HepG2 (cell line): ENCODE measurements at regions of chr21 and their contacts with region 1.

Region 1: GRCh38 chr21:44845399-44846223 is 27.7 kb upstream of the SUMO3 start:
- DNase-seq: peak; percentile 76
- ATAC-seq: peak; percentile 77
- H3K4me3 ChIP-seq: peak overlapping the region; percentile 43 to 67 (median 58)
- H3K27ac ChIP-seq: no peak overlapping the region
- H3K4me1 ChIP-seq: peaks cover 52% of the 10 kb centered on the region
- H3K27me3 ChIP-seq: peaks cover 1 to 37% of the 10 kb centered on the region in 2 experiments; a peak in 4 of 5 replicates
- CTCF ChIP-seq: peak; percentile 54
- EP300 ChIP-seq: 0 out of 4 replicates have a peak, but pooled peaks of 1 of the 2 experiments have one; percentile 4
- POLR2A ChIP-seq: no peak
- RAD21 ChIP-seq: 0 out of 2 replicates have a peak, but pooled peaks have one; percentile 24

Region 2: DNA sequence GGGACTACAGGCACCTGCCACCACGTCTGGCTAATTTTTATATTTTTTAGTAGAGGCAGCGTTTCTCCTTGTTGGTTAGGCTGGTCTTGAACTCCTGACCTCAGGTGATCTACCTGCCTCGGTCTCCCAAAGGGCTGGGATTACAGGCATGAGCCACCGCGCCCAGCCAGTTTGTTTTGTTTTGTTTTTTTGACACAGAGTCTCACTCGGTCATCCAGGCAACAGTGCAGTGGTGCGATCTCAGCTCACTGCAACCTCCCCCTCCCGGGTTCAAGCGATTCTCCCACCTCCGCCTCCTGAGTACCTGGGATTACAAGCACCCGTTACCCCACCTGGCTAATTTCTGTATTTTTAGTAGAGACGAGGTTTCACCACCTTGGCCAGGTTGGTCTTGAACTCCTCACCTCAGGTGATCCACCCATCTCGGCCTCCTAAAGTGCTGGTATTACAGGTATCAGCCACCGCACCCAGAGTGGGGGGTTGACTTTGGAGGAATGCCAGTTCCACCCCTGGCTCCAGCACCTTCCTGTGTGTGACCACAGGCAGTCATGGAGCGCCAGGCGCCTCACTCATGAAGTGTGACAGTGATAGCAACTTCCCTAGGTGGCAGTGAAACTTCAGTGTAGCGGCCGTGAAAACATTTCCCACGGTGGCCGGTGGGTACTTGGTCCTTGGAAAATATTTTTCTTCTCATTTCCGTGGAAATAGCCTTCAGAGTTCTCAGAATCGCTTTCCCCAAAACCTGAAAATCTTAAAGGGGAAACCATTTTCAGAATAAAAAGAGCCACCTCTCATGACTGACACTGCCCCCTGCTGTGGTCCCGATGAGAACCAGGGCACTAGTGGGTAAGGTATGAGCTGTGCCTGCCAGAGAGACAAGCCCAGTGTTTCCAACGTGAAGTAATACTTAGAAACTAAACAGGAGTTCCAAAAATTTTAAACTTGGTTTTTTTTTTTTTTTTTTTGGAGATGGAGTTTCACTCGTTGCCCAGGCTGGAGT is 2014.9 kb before region 1 on chr21:
- CTCF ChIA-PET with region 1: no interaction called
- POLR2A ChIA-PET with region 1: no interaction called
- in situ Hi-C with region 1: no loop called
- intact Hi-C with region 1: no loop called
- DNase-seq: no peak
- ATAC-seq: peak; percentile 7; the same call in 1 of the 3 replicates
- H3K4me3 ChIP-seq: no peak overlapping the region
- H3K27ac ChIP-seq: no peak overlapping the region
- H3K4me1 ChIP-seq: no peaks in the 10 kb centered on the region
- H3K27me3 ChIP-seq: no peaks in the 10 kb centered on the region
- CTCF ChIP-seq: no peak
- EP300 ChIP-seq: no peak
- POLR2A ChIP-seq: peak; percentile 8 to 20; a peak in 1 of 4 replicates
- RAD21 ChIP-seq: no peak

Region 3: DNA sequence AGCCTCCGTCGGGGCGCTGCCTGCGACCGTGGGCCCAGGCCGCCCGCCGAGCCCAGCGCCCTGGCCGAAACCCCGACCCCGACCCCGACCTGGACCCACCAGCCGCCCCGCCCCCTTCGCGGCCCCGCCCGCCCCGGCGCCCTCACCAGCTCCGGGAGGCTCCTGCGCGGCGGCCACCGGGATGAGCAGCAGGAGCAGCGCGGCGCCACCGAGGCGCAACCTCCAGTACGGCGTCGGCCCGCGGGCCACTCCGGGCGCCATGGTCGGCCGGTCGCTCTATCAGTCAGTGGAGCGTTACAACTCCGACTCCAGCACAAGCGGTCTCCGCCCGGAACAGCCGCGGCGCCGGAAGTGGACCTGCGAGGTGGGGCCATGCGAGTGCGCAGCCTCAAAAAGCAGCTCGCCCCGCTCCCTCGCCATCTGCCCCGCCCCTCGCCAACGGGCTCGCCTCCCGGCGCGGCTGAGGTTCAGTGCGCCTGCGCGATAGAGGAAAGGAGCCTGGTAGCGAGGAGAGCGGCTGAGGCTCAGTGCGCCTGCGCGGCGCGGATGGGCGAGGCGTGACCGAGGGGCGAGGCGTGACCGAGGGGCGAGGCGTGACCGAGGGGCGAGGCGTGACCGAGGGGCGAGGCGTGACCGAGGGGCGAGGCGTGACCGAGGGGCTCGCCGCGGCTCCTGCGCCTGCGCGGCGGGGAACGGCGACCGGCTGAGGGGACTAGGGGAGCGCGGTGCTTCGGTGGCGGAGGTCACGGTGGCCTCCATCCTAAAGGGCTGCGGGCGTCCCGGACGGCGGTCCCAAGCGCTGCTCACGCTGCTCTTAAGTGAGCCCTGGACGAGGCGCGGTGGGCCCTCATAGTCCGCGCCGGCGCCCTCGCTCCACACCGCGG is 28.0 kb after region 1 on chr21 and contains the start of gene PTTG1IP:
- CTCF ChIA-PET with region 1: no interaction called
- POLR2A ChIA-PET with region 1: interaction called, 6 read pairs
- in situ Hi-C with region 1: no loop called
- intact Hi-C with region 1: loop called (anchors 2 kb)
- DNase-seq: peak; percentile 93
- ATAC-seq: peak; percentile 70
- H3K4me3 ChIP-seq: peak within 1 kb of the TSS; percentile 71 to 94 (median 82)
- H3K27ac ChIP-seq: peak within 1 kb of the TSS; percentile 72
- H3K4me1 ChIP-seq: peaks cover 74% of the 10 kb centered on the region
- H3K27me3 ChIP-seq: no peaks in the 10 kb centered on the region; a peak in 1 of 5 replicates
- CTCF ChIP-seq: 0 out of 2 replicates have a peak, but pooled peaks have one; percentile 2
- EP300 ChIP-seq: no peak
- POLR2A ChIP-seq: peak in 1 of 2 experiments; percentile 80; a peak in 2 of 4 replicates
- RAD21 ChIP-seq: no peak
- total RNA-seq, gene PTTG1IP: 89.4 and 161 TPM in 2 replicates

Region 4: GRCh38 chr21:45130324-45130774 is 284.7 kb after region 1 on chr21:
- CTCF ChIA-PET with region 1: no interaction called
- POLR2A ChIA-PET with region 1: no interaction called
- in situ Hi-C with region 1: no loop called
- intact Hi-C with region 1: no loop called
- DNase-seq: no peak
- ATAC-seq: no peak
- H3K4me3 ChIP-seq: no peak overlapping the region
- H3K27ac ChIP-seq: no peak overlapping the region
- H3K4me1 ChIP-seq: no peaks in the 10 kb centered on the region
- H3K27me3 ChIP-seq: no peaks in the 10 kb centered on the region
- CTCF ChIP-seq: no peak
- EP300 ChIP-seq: no peak
- POLR2A ChIP-seq: no peak
- RAD21 ChIP-seq: no peak